Right cardiac atrium (tissue), 5 donors: ENCODE measurements at regions of chr10 and their contacts with region 1.

Region 1: DNA sequence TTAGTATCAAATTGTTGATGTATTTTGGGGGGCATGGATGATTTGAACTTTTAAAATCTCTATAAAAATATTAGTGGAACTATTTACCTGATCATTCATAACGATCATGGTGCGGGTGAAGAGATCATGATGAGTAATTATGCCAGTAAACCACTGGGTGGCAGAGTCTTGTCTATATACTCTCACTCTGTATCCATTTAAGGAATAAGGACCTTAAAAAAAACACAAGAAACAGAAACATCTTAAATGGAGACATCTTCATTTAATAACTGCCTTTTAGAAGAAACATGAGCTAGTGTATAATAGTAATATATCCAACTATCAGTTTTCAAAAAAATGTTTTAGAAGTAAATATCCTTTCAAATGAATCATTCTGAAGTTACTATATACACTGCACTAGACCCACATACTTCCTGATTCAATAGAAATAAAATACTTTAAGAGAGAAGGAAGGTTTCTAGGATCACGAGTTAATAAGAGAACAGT is 84.0 kb downstream of the NRBF2 start:
- DNase-seq: no peak
- ATAC-seq: peak; percentile 72 to 82
- H3K4me3 ChIP-seq: no peak overlapping the region
- H3K27ac ChIP-seq: no peak overlapping the region
- H3K4me1 ChIP-seq: no peaks in the 10 kb centered on the region
- H3K27me3 ChIP-seq: no peaks in the 10 kb centered on the region

Region 2: GRCh38 chr10:62885684-62886467 is 331.3 kb before region 1 on chr10:
- intact Hi-C with region 1: no loop called
- DNase-seq: no peak
- ATAC-seq: peak; percentile 87 to 91
- H3K4me3 ChIP-seq: no peak overlapping the region
- H3K27ac ChIP-seq: no peak overlapping the region
- H3K4me1 ChIP-seq: no peaks in the 10 kb centered on the region
- H3K27me3 ChIP-seq: peaks cover 3% of the 10 kb centered on the region

Region 3: GRCh38 chr10:63083904-63084689 is 133.1 kb before region 1 on chr10:
- intact Hi-C with region 1: no loop called
- DNase-seq: peak; percentile 69 to 80 (median 72)
- ATAC-seq: peak; percentile 85 to 86
- H3K4me3 ChIP-seq: no peak overlapping the region
- H3K27ac ChIP-seq: no peak overlapping the region
- H3K4me1 ChIP-seq: no peaks in the 10 kb centered on the region
- H3K27me3 ChIP-seq: peaks cover 2% of the 10 kb centered on the region

Region 4: DNA sequence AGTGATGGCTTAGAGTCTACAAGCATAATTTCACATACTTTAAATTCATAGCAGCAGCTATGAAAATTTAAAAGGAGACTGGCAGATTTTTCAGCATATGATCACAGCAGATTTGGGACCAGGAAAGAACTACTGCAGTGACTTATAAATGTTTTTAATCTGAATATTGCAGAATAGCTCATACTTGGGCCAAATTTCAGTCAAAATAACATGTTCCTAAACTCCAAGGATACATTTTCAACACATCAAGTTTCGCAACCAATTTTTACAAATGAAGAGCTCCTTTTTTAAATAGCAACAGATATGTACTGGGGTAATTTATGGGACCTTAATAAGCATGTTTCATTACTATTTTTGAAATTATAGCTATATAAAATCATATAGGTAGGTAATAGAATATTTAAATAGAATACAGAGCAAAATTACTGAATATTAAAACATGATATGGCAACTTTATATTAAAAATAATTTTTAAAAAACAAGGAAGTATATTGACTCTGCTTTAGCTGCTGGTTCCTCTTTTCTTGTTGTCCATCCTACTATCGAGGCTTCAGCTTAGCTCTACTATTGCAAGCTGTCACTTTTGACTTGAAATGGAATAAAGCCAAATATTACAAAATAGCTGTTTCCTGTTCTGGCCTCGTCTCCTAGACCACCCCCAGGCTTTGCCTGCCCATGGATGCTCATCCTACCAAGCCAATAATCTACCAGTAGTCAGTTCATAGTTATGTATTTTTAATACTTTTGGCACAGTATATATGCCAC is 39.0 kb after region 1 on chr10:
- intact Hi-C with region 1: loop called in 1 of 4 experiments (anchors 5 kb)
- DNase-seq: peak in 1 of 3 donors; percentile 51
- ATAC-seq: peak; percentile 77 to 84
- H3K4me3 ChIP-seq: no peak overlapping the region
- H3K27ac ChIP-seq: no peak overlapping the region
- H3K4me1 ChIP-seq: peaks cover 6% of the 10 kb centered on the region
- H3K27me3 ChIP-seq: no peaks in the 10 kb centered on the region